ENCODE measurements at regions of chr2 and their contacts with region 1.

Region 1: GRCh38 chr2:223123855-223124610 is 72.0 kb downstream of the KCNE4 start:
- DNase-seq: no peak
- H3K4me3 ChIP-seq: no peak overlapping the region
- H3K27ac ChIP-seq: no peak overlapping the region
- H3K4me1 ChIP-seq: no peaks in the 10 kb centered on the region
- H3K27me3 ChIP-seq: no peaks in the 10 kb centered on the region
- CTCF ChIP-seq: no peak

Region 2: DNA sequence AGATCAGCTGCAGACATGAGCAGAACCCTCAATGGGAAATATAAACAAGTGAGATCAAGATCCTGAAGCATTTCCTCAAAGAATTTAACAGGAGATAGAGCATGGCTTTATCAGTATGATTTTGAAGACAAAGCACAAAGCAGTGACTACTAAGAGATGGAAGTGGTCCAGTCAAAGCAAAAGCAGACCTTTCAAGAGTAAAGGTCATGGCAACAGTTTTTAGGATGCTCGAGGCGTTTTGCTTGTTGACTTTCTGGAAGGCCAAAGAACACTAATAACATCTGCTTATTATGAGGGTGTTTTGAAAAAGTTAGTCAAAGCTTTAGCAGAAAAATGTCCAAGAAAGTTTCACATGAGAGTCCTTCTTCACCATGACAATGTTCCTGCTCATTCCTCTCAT is 56.4 kb after region 1 on chr2:
- CTCF ChIA-PET with region 1: no interaction called
- dilution Hi-C with region 1: loop called (anchors 5 kb)
- in situ Hi-C with region 1: no loop called
- intact Hi-C with region 1: no loop called
- DNase-seq: no peak
- H3K4me3 ChIP-seq: no peak overlapping the region
- H3K27ac ChIP-seq: no peak overlapping the region
- H3K4me1 ChIP-seq: no peaks in the 10 kb centered on the region
- H3K27me3 ChIP-seq: no peaks in the 10 kb centered on the region
- CTCF ChIP-seq: no peak